ENCODE measurements at regions of chr3 and their contacts with region 1.

Region 1: DNA sequence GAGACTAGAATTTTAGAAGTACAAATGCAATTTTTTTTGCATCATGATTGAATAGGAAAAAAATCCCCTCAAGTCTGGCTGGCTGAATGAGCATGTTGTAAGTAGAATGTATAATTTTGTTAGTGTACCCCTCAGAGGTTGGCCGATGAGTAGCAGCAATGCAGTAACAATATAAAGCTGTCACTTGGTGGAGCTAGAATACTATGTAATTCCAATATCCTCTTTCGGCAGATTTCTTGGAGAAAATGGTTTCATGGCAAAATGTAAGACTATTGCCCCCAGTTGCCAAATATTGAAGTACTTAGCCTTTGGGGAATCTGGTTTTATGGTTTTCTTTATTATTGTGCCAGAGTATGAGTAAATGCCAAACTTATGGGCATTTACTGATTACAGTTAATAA is 39.8 kb upstream of the SGO1 start:
- DNase-seq: peak; percentile 56
- ATAC-seq: peak; percentile 85
- H3K4me3 ChIP-seq: no peak overlapping the region
- H3K27ac ChIP-seq: no peak overlapping the region
- H3K4me1 ChIP-seq: no peaks in the 10 kb centered on the region
- H3K27me3 ChIP-seq: no peaks in the 10 kb centered on the region
- CTCF ChIP-seq: peak; percentile 65
- EP300 ChIP-seq: no peak
- POLR2A ChIP-seq: no peak
- RAD21 ChIP-seq: peak; percentile 40; the same call in 1 of the 2 replicates

Region 2: DNA sequence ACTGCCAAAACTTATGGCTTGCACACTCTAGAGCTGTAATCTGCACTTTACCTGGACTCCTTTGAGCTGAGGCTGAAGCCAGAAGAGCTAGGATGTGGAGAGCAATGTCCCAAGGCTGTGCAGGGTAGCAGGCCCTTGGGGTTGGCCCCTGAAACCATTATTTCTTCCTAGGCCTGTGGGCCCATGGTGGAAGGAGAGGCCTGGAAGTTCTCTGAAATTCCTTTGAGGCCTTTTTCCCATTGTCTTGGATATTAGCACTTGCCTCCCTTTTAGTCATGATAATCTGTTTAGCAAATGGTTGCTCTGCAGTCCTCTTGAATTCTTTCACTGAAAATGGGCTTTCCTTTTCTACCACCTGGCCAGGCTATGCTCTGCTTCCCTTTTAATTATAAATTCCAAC is 62.3 kb after region 1 on chr3:
- CTCF ChIA-PET with region 1: no interaction called
- POLR2A ChIA-PET with region 1: no interaction called
- in situ Hi-C with region 1: no loop called
- intact Hi-C with region 1: no loop called
- DNase-seq: no peak
- ATAC-seq: no peak
- H3K4me3 ChIP-seq: no peak overlapping the region
- H3K27ac ChIP-seq: no peak overlapping the region
- H3K4me1 ChIP-seq: no peaks in the 10 kb centered on the region
- H3K27me3 ChIP-seq: no peaks in the 10 kb centered on the region
- CTCF ChIP-seq: no peak
- EP300 ChIP-seq: no peak
- POLR2A ChIP-seq: no peak
- RAD21 ChIP-seq: no peak

Region 3: DNA sequence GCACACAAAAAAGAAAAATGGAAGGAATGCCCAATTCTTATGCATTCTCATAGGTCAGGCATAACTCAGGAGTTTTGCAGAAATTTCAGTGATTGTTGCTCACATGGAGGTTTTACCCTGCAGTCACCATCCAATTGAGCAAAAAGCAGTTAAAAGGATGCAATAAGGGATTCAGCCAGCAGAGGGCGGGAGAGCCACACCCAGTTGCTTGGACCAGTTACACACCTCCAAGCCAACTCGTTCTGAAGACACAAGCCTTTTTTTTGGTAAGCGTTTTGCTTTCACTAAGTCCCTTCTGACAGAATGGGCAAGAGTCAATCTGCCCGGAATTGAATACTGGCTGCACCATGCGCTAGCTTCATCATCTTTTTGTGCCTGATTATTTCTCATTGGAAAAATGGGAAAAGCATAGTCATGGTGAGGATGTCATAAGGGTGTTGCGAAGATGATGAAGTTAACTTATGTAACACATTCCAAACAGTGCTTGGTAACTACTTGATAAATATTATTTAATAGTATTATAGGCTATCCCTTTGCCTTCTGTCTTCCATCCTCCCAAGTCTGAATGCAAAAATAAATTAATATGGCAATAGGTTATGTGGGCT is 114.7 kb after region 1 on chr3:
- CTCF ChIA-PET with region 1: interaction called, 3 read pairs
- POLR2A ChIA-PET with region 1: no interaction called
- in situ Hi-C with region 1: no loop called
- intact Hi-C with region 1: loop called (anchors 2 kb)
- DNase-seq: peak; percentile 62
- ATAC-seq: peak; percentile 93
- H3K4me3 ChIP-seq: no peak overlapping the region
- H3K27ac ChIP-seq: no peak overlapping the region
- H3K4me1 ChIP-seq: no peaks in the 10 kb centered on the region
- H3K27me3 ChIP-seq: no peaks in the 10 kb centered on the region
- CTCF ChIP-seq: peak; percentile 85
- EP300 ChIP-seq: no peak
- POLR2A ChIP-seq: no peak
- RAD21 ChIP-seq: peak; percentile 66; the same call in 1 of the 2 replicates

Region 4: DNA sequence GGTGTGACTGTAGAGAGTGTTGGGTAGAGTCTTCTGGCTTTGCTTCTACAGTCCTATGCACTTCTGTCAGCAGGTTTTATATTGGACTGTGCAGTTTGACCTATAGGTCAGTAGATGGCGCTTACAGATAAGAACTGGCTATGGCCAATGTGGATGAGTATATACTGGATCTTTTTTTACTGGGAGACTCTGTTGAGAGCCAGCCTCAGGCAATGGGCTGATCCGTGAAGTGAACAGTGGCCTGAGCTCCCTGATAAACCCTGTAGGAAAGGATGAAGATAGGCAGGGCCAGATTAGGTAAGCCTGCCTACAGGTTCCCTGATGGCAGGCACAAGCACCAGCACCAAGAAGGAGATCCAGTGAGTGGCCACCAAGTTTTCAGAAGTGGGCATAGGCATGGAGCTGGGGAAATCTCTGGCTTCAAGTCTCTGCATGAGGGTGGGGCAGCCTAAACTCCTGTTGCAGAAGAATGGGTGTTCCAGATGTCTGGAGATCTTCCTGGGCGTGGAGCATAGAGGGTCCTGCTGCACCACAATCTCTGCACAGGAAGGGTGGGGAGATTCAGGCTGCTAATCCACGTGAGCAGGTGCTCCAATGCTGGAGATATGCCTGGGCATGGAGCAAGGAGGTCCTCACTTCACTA is 286.2 kb after region 1 on chr3:
- CTCF ChIA-PET with region 1: no interaction called
- POLR2A ChIA-PET with region 1: no interaction called
- in situ Hi-C with region 1: no loop called
- intact Hi-C with region 1: loop called (anchors 1 kb)
- DNase-seq: peak; percentile 43
- ATAC-seq: peak; percentile 99
- H3K4me3 ChIP-seq: no peak overlapping the region
- H3K27ac ChIP-seq: no peak overlapping the region
- H3K4me1 ChIP-seq: no peaks in the 10 kb centered on the region
- H3K27me3 ChIP-seq: no peaks in the 10 kb centered on the region
- CTCF ChIP-seq: peak; percentile 85
- EP300 ChIP-seq: no peak
- POLR2A ChIP-seq: no peak
- RAD21 ChIP-seq: peak; percentile 76

Region 5: DNA sequence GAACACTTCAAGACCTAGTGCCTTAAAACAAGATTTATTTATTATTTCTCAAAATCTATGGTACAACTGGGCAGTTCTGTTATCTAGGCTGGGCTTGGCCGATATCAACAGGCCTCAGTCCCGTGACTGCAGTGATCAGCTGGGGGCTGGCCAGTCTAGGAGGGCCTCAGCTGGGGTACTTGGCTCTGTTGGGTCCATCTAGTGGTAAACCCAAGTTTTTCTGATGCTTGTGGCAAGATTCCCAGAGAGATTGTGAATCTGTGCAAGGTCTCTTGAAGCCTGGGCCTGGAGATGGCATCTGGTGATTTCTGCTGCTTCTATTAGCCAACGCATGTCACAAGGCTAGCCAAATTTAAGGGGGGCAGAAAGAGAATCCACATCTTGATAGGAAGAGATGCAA is 442.6 kb after region 1 on chr3:
- CTCF ChIA-PET with region 1: no interaction called
- POLR2A ChIA-PET with region 1: no interaction called
- in situ Hi-C with region 1: no loop called
- intact Hi-C with region 1: loop called (anchors 10 kb)
- DNase-seq: peak; percentile 2
- ATAC-seq: peak; percentile 77
- H3K4me3 ChIP-seq: no peak overlapping the region
- H3K27ac ChIP-seq: no peak overlapping the region
- H3K4me1 ChIP-seq: no peaks in the 10 kb centered on the region
- H3K27me3 ChIP-seq: no peaks in the 10 kb centered on the region
- CTCF ChIP-seq: no peak
- EP300 ChIP-seq: no peak
- POLR2A ChIP-seq: no peak
- RAD21 ChIP-seq: no peak

Region 6: GRCh38 chr3:21894459-21895340 is 1668.9 kb after region 1 on chr3:
- CTCF ChIA-PET with region 1: no interaction called
- POLR2A ChIA-PET with region 1: no interaction called
- in situ Hi-C with region 1: loop called (anchors 25 kb)
- intact Hi-C with region 1: no loop called
- DNase-seq: no peak
- ATAC-seq: no peak; the same call in 2 of the 3 replicates
- H3K4me3 ChIP-seq: no peak overlapping the region
- H3K27ac ChIP-seq: no peak overlapping the region
- H3K4me1 ChIP-seq: no peaks in the 10 kb centered on the region
- H3K27me3 ChIP-seq: no peaks in the 10 kb centered on the region
- CTCF ChIP-seq: peak; percentile 24; the same call in 1 of the 2 replicates
- EP300 ChIP-seq: no peak
- POLR2A ChIP-seq: no peak
- RAD21 ChIP-seq: no peak

Region 7: DNA sequence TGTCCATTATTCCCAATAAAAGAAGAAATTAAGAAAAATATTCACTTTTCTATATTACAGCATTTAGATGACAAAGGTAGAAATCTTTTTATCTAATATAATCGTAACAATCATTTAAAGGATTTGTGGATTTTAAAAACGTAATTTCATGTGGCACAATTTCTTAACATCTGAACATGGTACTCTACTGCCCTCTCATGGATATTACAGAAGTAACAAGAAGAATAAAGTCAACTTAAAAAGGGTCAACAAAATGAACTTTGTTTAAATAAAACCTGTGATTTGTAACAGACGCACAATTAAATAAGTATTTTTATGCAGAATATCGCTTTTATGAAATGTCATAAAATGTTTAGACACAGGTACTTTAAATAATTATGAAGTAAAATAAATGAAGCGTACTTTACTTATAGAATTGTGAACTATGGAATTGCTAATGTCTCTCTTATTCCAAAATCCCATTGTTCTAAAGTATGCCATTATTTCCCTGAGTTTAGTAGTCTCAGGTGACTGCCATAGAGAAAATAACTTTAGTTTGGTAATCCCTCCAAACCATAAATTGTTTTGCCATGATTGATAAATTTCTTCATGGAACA is 1892.1 kb after region 1 on chr3:
- CTCF ChIA-PET with region 1: no interaction called
- POLR2A ChIA-PET with region 1: no interaction called
- in situ Hi-C with region 1: no loop called
- intact Hi-C with region 1: loop called (anchors 5 kb)
- DNase-seq: peak; percentile 34
- ATAC-seq: no peak
- H3K4me3 ChIP-seq: no peak overlapping the region
- H3K27ac ChIP-seq: no peak overlapping the region
- H3K4me1 ChIP-seq: peaks cover 26% of the 10 kb centered on the region
- H3K27me3 ChIP-seq: no peaks in the 10 kb centered on the region
- CTCF ChIP-seq: peak; percentile 55
- EP300 ChIP-seq: no peak
- POLR2A ChIP-seq: no peak
- RAD21 ChIP-seq: no peak